Activated CD8-positive, alpha-beta T cell treated with anti-CD3 and anti-CD28 coated beads for 36 hours (primary cell): ENCODE measurements at regions of chr2 and their contacts with region 1.

Region 1: GRCh38 chr2:219459460-219460311 is 25.0 kb downstream of the SPEG start:
- DNase-seq: peak; percentile 62
- ATAC-seq: peak; percentile 50
- H3K4me3 Mint-ChIP-seq: no peak overlapping the region
- H3K27ac Mint-ChIP-seq: peak overlapping the region; percentile 25
- H3K4me1 Mint-ChIP-seq: peaks cover 14% of the 10 kb centered on the region
- H3K27me3 Mint-ChIP-seq: no peaks in the 10 kb centered on the region
- CTCF ChIP-seq: peak; percentile 84

Region 2: GRCh38 chr2:219441451-219442255 is 18.0 kb before region 1 on chr2:
- CTCF ChIA-PET with region 1: interaction called, 24 read pairs
- POLR2A ChIA-PET with region 1: interaction called, 3 read pairs
- intact Hi-C with region 1: no loop called
- DNase-seq: peak; percentile 51
- ATAC-seq: peak; percentile 61
- H3K4me3 Mint-ChIP-seq: peak overlapping the region; percentile 70
- H3K27ac Mint-ChIP-seq: no peak overlapping the region
- H3K4me1 Mint-ChIP-seq: peaks cover 17% of the 10 kb centered on the region
- H3K27me3 Mint-ChIP-seq: peaks cover 17% of the 10 kb centered on the region
- CTCF ChIP-seq: no peak

Region 3: DNA sequence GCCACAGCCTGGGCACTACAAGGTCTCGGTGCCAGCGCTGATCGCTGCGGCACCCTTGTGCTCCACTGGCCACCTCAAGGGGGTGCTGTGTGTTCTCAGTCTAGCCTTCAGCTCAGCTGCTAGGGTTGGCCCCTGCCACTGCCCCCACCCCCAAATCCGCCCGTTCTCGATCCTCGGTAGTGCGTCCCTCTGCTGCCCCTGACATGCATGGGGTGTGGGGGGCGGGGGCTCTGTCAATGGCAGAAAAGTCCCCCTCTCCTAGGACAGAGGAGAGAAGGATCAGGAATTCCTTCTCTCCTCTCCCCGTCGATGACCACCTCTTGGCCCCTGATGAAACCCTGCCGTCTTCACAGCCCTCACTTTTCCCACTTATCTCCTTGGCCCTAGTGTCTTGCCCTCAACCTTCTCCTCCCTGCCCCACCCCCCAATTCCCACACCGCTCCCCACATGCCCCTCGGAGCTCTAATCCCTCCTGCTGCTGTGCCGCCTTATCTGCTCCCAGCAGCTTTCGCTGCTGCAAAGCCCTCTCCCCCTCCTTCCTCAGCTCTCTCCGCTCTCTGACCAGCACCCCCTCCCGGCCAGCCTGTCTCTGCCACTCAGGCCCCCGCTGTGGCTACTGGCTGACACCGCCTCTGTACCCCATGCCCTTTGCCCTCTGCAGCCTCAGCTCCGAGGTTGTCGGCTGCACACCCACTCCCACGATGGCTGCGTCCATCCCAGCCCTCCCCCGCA is 50.3 kb after region 1 on chr2:
- CTCF ChIA-PET with region 1: interaction called, 10 read pairs
- POLR2A ChIA-PET with region 1: no interaction called
- intact Hi-C with region 1: no loop called
- DNase-seq: peak; percentile 69
- ATAC-seq: peak; percentile 89
- H3K4me3 Mint-ChIP-seq: no peak overlapping the region
- H3K27ac Mint-ChIP-seq: no peak overlapping the region
- H3K4me1 Mint-ChIP-seq: peaks cover 18% of the 10 kb centered on the region
- H3K27me3 Mint-ChIP-seq: peaks cover 44% of the 10 kb centered on the region
- CTCF ChIP-seq: peak; percentile 53

Region 4: GRCh38 chr2:219612577-219613286 is 153.0 kb after region 1 on chr2:
- CTCF ChIA-PET with region 1: no interaction called
- POLR2A ChIA-PET with region 1: no interaction called
- intact Hi-C with region 1: no loop called
- DNase-seq: peak; percentile 37
- ATAC-seq: peak; percentile 53
- H3K4me3 Mint-ChIP-seq: no peak overlapping the region
- H3K27ac Mint-ChIP-seq: peak overlapping the region; percentile 25
- H3K4me1 Mint-ChIP-seq: peaks cover 15% of the 10 kb centered on the region
- H3K27me3 Mint-ChIP-seq: no peaks in the 10 kb centered on the region
- CTCF ChIP-seq: no peak